Activated CD4-positive, alpha-beta memory T cell treated with anti-CD3 and anti-CD28 coated beads for 36 hours (primary cell): ENCODE measurements at regions of chr3 and their contacts with region 1.

Region 1: DNA sequence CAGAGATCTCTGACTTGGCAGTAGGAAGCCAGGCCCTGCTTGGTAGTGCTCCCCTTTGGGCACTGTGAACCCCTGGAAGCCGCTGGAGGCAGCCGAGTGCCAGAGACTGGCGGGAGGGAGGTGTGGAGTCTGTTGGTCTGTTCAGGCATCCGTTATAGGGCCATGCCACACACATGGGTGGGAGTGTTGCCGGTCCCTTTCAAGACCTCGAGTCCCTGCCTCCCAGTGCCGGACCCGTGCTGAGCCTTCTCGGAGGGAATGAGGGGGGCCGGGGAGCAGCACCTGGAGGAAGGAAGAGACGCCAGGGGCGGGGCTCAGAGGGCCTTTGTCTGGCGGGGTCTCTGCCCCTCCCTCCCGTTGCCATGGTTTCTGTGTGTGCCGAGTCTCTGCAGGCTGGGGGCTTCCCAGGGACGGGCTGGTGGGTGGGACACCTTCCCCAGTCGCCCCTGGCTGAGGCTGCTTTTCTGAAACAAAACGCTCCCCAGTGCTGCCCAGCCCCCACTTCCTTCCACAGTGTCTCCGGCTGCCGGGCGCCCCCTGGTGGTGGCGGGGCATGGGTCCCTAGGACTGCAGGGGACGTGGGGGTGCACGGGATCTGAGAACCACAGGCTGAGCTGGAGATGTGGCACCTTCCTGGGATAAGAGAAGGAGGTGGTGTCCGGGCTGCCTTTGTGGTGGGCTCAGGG is 10.0 kb downstream of the GNAI2 start:
- DNase-seq: peak; percentile 96
- H3K4me3 Mint-ChIP-seq: peak overlapping the region; percentile 77
- H3K27ac Mint-ChIP-seq: peak overlapping the region; percentile 96
- H3K4me1 Mint-ChIP-seq: peaks cover 82% of the 10 kb centered on the region
- H3K27me3 Mint-ChIP-seq: no peaks in the 10 kb centered on the region

Region 2: DNA sequence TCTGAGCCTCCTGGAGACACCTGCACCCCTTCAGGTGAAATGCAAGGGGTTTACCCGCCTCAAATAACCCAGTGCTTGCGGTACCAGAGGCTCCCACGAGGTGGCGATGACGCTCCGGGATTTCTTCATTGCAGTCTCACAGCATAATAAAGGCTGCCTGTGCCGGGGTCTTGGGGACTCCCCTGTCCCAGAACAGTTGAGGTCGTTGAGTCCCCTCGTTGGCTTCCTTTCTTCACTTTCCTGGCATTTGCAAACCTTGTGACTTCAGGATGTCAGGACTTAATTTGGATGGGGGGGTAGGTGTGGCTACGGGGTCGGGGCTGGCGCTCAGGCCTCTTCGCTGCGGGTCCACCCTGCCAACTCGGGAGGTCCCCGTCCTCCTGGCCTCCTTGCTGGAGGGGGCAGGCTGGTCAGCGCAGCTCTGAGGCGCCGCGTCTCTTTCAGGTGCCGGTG is 53.3 kb before region 1 on chr3:
- CTCF ChIA-PET with region 1: interaction called, 42 read pairs
- POLR2A ChIA-PET with region 1: no interaction called
- intact Hi-C with region 1: no loop called
- DNase-seq: peak; percentile 89
- H3K4me3 Mint-ChIP-seq: no peak overlapping the region
- H3K27ac Mint-ChIP-seq: no peak overlapping the region
- H3K4me1 Mint-ChIP-seq: peaks cover 10% of the 10 kb centered on the region
- H3K27me3 Mint-ChIP-seq: peaks cover 11% of the 10 kb centered on the region

Region 3: DNA sequence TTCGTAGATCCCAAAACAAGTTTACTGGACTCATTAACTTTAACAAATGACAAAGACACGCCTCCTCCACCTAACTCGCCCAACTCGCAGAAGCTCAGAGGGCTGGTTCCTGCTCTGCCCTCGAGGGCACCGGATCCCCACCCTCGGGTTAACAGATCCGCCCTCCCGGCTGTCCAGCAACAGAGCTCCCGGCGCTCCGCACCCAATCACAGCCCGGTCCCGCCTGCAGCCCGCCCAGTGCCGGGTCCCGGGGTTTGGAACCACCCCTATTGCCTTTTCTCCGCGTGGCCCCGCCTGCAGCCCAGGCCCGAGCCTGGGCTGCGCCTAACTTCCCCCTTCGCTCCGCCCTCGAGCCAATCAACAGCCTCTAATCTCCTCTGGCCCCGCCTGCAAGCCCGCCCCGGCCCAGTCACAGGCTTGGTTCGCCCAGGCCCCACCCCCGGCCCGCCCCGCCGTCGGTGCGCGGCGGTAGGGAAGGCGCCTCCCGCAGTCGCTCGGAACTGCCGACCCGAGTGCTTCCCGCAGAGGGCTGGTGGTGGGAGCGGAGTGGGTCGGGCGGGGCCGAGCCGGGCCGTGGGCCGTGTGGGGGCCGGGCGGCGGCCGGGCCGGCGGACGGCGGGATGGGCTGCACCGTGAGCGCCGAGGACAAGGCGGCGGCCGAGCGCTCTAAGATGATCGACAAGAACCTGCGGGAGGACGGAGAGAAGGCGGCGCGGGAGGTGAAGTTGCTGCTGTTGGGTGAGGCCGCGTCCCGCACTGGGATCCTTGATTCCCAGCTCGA is 10.1 kb before region 1 on chr3 and contains the start of gene GNAI2:
- CTCF ChIA-PET with region 1: interaction called, 307 read pairs
- POLR2A ChIA-PET with region 1: interaction called, 13 read pairs
- intact Hi-C with region 1: loop called (anchors 1 kb)
- DNase-seq: peak; percentile 100
- H3K4me3 Mint-ChIP-seq: peak within 1 kb of the TSS; percentile 91
- H3K27ac Mint-ChIP-seq: peak within 1 kb of the TSS; percentile 94
- H3K4me1 Mint-ChIP-seq: peaks cover 31% of the 10 kb centered on the region
- H3K27me3 Mint-ChIP-seq: no peaks in the 10 kb centered on the region
- total RNA-seq, gene GNAI2: 346 to 349 TPM

Region 4: GRCh38 chr3:50272911-50273693 is 27.1 kb after region 1 on chr3:
- CTCF ChIA-PET with region 1: interaction called, 14 read pairs
- POLR2A ChIA-PET with region 1: no interaction called
- intact Hi-C with region 1: loop called (anchors 1 kb)
- DNase-seq: peak; percentile 94
- H3K4me3 Mint-ChIP-seq: peak overlapping the region; percentile 38
- H3K27ac Mint-ChIP-seq: no peak overlapping the region
- H3K4me1 Mint-ChIP-seq: peaks cover 32% of the 10 kb centered on the region
- H3K27me3 Mint-ChIP-seq: peaks cover 27% of the 10 kb centered on the region

Region 5: GRCh38 chr3:50298836-50299637 is 53.1 kb after region 1 on chr3 and contains the starts of genes HYAL3 and NAA80:
- CTCF ChIA-PET with region 1: interaction called, 8 read pairs
- POLR2A ChIA-PET with region 1: interaction called, 3 read pairs
- intact Hi-C with region 1: loop called (anchors 1 kb)
- DNase-seq: peak; percentile 100
- H3K4me3 Mint-ChIP-seq: peak within 1 kb of the TSS; percentile 97
- H3K27ac Mint-ChIP-seq: peak within 1 kb of the TSS; percentile 95
- H3K4me1 Mint-ChIP-seq: peaks cover 24% of the 10 kb centered on the region
- H3K27me3 Mint-ChIP-seq: no peaks in the 10 kb centered on the region
- total RNA-seq, gene HYAL3: 2.5 to 4.0 TPM
- total RNA-seq, gene NAA80: 18.8 to 19.6 TPM

Region 6: DNA sequence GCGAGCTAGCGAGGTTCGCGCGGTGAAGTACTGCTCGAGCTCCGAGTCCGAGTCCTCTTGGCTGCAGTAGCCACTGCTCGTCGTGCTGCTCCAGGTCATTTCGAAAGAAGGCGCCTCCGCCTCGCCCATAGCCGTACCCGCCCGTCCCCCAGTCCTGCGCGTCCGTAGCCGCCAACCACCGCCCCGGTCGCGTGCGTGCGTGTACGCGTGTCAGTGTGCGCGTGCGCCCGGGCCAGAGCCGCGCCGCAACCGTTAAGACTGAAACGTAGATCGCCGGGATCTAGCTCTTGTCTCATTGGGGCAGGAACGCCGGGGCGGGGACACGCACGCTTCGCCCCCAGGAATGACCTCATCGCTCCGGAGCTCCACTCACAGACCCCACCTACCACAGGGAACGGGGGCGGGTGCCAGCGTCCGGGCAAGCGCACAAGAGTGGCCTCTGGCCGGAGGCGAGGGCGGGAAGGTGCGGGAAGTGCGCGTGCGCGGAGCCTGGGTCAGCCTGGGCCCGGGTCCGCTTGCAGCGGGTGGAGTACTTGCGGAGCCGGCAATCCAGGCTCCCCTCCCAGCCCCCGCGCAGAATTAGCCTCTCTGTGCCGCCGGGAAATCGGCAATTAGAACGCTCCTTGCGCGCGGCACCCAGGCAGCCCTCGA is 91.3 kb after region 1 on chr3:
- CTCF ChIA-PET with region 1: interaction called, 12 read pairs
- POLR2A ChIA-PET with region 1: interaction called, 5 read pairs
- intact Hi-C with region 1: no loop called
- DNase-seq: peak; percentile 99
- H3K4me3 Mint-ChIP-seq: peak overlapping the region; percentile 97
- H3K27ac Mint-ChIP-seq: peak overlapping the region; percentile 92
- H3K4me1 Mint-ChIP-seq: peaks cover 57% of the 10 kb centered on the region
- H3K27me3 Mint-ChIP-seq: no peaks in the 10 kb centered on the region

Region 7: GRCh38 chr3:50388016-50388719 is 142.2 kb after region 1 on chr3:
- CTCF ChIA-PET with region 1: no interaction called
- POLR2A ChIA-PET with region 1: no interaction called
- intact Hi-C with region 1: no loop called
- DNase-seq: no peak
- H3K4me3 Mint-ChIP-seq: no peak overlapping the region
- H3K27ac Mint-ChIP-seq: no peak overlapping the region
- H3K4me1 Mint-ChIP-seq: no peaks in the 10 kb centered on the region
- H3K27me3 Mint-ChIP-seq: no peaks in the 10 kb centered on the region

Region 8: DNA sequence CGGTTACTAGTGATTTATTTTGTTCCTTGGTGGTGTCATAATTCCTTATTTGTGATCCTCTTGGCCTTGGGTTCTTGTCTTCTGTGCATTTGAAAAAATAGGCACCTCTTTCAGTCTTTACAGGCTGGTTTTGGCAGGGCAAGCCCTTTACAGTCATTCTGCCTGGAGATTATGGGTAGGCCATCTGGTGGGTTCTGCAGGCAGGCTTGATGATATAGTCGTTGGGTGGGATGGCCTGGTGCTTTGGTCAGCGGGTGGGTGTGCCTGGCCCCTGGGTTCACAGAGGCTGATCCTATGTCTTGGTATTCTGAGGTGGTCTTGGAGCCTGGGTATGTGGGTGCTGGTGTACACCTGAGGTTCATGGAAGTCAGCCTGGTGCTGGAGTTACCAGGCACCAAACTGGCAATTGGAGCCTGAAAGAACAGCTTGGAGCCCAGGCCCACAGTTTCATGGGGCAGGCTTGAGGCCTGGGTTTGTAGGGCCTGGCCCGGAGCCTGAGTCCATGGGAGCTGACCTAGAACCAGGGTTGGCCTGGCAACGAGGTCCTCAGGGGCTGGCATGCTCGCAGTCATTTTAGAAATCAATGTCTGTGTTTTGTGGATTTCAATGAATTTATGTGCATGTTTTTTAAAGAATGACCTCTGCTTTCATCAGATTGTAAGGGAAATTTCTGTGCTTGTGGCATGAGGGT is 492.1 kb after region 1 on chr3:
- CTCF ChIA-PET with region 1: no interaction called
- POLR2A ChIA-PET with region 1: no interaction called
- intact Hi-C with region 1: no loop called
- DNase-seq: no peak
- H3K4me3 Mint-ChIP-seq: no peak overlapping the region
- H3K27ac Mint-ChIP-seq: no peak overlapping the region
- H3K4me1 Mint-ChIP-seq: no peaks in the 10 kb centered on the region
- H3K27me3 Mint-ChIP-seq: no peaks in the 10 kb centered on the region